Activated CD4-positive, alpha-beta memory T cell treated with anti-CD3 and anti-CD28 coated beads for 36 hours (primary cell): ENCODE measurements at regions of chr9 and their contacts with region 1.

Region 1: DNA sequence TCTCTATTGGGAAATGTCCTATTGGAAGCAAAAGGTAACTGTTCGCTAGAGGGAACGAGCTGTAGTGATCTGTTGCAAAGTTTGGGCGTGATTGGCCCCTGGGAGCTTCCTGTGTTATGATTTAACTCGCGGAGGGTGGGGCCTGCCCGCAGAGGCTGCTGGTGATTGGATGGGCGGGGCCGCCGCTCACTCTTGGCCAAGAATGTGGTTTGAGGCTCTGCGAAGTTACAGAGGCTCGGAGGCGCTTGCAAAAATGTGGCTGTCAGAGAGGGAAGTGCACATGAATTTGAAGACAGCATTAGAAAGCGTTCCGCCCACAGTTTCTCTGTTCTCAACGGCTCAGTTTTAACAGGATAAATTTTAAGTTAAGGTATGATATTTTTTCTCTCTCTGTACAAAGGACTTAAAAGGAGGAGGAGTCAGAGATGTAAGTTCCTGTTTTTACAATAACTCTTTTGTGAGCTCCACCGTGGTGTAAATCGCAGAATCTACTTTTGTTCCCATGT is 46.9 kb downstream of the CNTRL start:
- DNase-seq: peak; percentile 99
- H3K4me3 Mint-ChIP-seq: peak overlapping the region; percentile 77
- H3K27ac Mint-ChIP-seq: peak overlapping the region; percentile 89
- H3K4me1 Mint-ChIP-seq: peaks cover 48% of the 10 kb centered on the region
- H3K27me3 Mint-ChIP-seq: no peaks in the 10 kb centered on the region

Region 2: DNA sequence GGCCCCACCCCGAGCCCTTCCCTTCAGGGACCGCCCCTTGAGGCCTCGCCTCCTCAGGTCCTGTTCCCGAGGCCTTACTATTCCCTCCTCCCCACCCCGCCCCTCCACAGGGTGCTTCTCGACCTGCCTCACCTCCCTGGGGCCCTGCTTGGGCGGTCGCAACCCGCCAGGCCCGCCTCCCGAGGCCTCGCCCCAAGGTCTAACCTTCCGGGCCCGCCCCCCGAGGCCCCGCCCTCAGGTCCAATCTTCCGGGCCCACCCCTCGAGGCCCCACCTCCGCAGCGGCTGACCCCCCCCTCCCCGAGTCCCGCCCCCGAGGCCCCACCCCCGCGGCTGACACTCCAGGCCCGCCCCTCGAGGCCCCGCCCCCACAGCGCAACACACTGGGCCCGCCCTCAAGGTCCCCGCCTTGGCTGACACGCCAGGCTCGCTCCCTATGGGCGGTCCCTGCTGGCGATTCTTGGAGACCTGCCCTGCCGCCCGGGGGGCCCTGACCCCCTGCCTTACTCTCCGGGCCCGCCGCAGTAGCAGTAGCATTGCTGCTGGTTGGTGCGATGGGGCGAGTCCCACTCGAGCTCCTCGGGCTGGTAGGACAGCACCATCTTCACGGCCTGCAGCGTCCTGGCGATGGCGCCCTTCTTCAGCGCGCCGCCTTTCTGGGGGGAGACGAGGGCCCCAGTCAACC is 252.8 kb before region 1 on chr9:
- CTCF ChIA-PET with region 1: no interaction called
- POLR2A ChIA-PET with region 1: no interaction called
- intact Hi-C with region 1: loop called (anchors 2 kb)
- DNase-seq: peak; percentile 97
- H3K4me3 Mint-ChIP-seq: peak overlapping the region; percentile 80
- H3K27ac Mint-ChIP-seq: peak overlapping the region; percentile 87
- H3K4me1 Mint-ChIP-seq: peaks cover 46% of the 10 kb centered on the region
- H3K27me3 Mint-ChIP-seq: no peaks in the 10 kb centered on the region

Region 3: GRCh38 chr9:120985810-120986222 is 135.8 kb before region 1 on chr9:
- CTCF ChIA-PET with region 1: interaction called, 12 read pairs
- POLR2A ChIA-PET with region 1: interaction called, 3 read pairs
- intact Hi-C with region 1: no loop called
- DNase-seq: no peak
- H3K4me3 Mint-ChIP-seq: no peak overlapping the region
- H3K27ac Mint-ChIP-seq: no peak overlapping the region
- H3K4me1 Mint-ChIP-seq: no peaks in the 10 kb centered on the region
- H3K27me3 Mint-ChIP-seq: no peaks in the 10 kb centered on the region

Region 4: DNA sequence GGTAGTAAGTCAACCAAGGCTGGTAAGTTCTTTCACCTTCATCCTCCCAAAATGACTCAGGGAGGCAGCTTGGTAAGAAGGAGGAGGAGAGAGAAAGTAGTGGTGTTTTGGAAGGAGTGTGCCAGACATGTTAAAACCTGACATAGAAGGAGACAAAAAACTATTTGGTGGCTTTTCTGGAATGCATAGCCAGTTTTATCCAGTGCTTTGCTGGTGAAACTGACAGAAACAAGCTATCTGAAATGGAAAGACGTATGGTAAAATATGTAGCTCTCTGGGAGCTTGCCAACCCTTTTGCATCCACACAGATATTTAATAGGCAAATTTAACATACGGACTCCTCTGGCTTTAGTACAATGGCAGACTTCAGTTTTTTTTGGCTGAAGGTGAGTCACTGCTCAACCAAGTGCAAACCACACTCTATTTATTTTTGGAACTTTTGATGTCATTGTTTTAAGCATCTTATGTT is 34.7 kb after region 1 on chr9:
- CTCF ChIA-PET with region 1: no interaction called
- POLR2A ChIA-PET with region 1: no interaction called
- intact Hi-C with region 1: loop called (anchors 1 kb)
- DNase-seq: no peak
- H3K4me3 Mint-ChIP-seq: peak overlapping the region; percentile 3
- H3K27ac Mint-ChIP-seq: peak overlapping the region; percentile 90
- H3K4me1 Mint-ChIP-seq: peaks cover 24% of the 10 kb centered on the region
- H3K27me3 Mint-ChIP-seq: no peaks in the 10 kb centered on the region

Region 5: DNA sequence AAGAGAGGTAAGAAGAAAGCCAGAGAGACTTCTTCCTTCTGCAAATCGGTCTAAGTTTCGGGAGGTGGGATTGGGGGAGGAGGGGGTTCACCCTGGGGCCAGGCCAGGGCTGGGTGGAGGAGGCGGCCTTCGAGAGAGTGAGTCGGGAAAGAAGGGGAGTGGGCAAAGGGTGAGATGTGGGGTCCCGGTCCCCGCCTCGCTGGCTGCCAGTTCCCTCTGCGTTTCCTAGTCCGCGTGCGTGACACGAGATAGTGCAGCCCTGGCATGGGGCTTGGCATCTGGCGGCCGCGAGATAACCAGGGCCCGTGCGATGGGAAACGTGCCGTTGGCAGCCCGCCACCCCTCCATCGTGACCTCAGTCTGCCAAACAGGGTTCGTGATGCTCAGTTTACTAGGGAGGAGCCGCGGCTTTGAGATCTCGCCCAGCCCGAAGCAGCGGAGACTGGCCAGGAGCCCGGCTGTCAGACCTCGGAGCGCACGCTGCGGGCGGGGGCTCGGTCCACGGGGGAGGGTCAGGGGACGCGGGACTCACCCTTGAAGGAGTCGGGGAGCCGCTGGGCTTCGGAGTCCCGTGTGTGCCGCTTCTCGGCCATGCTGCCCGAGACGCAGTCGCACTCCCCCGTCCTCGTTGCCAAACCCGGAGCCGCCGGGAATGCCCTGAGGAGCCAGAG is 248.1 kb after region 1 on chr9 and contains the start of gene STOM:
- CTCF ChIA-PET with region 1: no interaction called
- POLR2A ChIA-PET with region 1: no interaction called
- intact Hi-C with region 1: loop called (anchors 5 kb)
- DNase-seq: peak; percentile 79
- H3K4me3 Mint-ChIP-seq: peak within 1 kb of the TSS; percentile 93
- H3K27ac Mint-ChIP-seq: peak within 1 kb of the TSS; percentile 99
- H3K4me1 Mint-ChIP-seq: peaks cover 58% of the 10 kb centered on the region
- H3K27me3 Mint-ChIP-seq: no peaks in the 10 kb centered on the region
- total RNA-seq, gene STOM: 49.8 to 51.9 TPM

Region 6: DNA sequence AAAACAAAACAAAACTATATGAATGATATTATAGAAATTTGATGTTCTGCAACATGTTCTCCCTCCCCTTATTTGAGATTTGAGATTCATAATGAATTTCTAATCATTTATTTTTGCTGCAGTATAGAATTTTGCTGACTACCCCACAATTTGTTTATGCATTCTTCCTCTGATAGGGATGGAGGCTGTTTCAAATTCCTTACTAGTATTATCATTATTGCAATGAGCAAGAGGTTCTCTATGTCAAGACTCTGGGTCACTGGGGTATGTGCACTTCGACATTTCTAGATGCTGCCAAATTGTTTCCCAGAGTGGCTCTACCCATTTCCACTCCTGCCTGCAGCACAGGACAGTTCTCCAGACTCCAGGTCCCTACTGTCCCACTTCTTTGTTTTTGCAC is 474.9 kb after region 1 on chr9:
- CTCF ChIA-PET with region 1: no interaction called
- POLR2A ChIA-PET with region 1: no interaction called
- intact Hi-C with region 1: no loop called
- DNase-seq: no peak
- H3K4me3 Mint-ChIP-seq: no peak overlapping the region
- H3K27ac Mint-ChIP-seq: no peak overlapping the region
- H3K4me1 Mint-ChIP-seq: no peaks in the 10 kb centered on the region
- H3K27me3 Mint-ChIP-seq: peaks cover 42% of the 10 kb centered on the region